ENCODE measurements at regions of chr15 and their contacts with region 1.

Region 1: DNA sequence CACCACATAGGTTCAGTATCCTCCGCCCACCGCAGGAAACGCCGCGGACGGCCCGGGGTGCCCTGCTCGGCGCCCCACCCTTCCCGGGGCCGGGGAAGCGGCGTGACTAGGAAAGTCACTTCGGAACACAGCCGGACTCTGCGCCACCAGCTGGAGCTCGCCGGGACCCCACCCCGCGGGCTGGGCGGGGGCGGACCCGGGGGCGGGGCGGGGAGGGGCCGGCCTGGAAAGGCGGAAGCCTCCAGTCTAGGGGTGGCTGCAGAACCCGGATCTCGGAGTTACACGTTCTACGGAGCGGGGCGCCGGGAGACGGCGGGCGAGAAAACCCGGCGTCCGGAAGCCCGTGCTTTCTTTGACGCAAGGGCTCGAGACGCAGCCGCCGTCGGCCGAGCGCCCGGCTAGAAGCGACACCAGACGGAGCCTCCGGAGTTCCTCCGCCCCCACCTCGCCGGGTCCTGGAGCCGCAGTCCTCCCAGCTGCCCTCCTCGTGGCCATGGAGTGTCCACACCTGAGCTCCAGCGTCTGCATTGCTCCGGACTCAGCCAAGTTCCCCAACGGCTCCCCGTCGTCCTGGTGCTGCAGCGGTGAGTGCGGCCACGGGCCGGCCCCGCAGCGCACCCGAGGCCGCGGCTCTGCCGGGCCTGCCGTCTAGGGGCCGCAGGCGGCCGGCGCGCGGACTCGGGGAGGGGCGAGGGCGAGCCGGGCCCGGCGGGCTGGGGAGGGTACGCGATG is at the start of gene USP3:
- DNase-seq: peak; percentile 99
- total RNA-seq, gene USP3: 40.3 to 41.8 TPM

Region 2: GRCh38 chr15:63553388-63553791 is 49.0 kb after region 1 on chr15:
- intact Hi-C with region 1: loop called in 1 of 2 experiments (anchors 10 kb)
- DNase-seq: no peak

Region 3: DNA sequence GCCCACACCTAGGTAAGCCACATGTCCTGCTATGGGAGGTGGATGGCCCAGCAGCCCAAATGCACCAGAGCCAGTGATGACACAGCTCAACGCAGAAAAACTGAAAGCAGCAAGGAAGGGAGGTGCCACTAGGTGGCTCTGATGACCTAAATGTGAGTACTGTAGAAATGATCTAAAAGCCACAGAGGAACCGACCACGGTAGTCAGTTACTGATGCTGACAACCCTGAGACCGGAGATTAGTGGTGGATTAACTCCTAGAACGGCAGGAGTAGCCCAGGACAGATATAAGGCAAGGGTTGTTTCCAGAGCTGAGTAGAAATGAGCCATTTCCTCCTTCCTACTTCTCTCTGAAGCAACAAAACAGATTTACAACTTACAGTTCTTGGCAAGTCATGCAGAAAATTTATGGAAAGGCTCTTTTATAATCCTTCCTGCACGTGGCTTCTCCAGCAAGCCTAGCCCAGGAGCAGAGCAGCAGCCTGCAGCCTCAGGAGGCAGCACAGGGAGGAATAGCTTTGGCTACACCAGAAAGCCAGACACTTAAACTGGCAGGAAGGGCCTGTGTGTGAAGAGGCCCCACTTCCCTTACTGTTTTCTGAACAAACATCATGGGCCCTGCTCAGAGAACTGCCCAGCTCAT is 105.9 kb after region 1 on chr15:
- intact Hi-C with region 1: no loop called
- DNase-seq: no peak

Measured in posterior vena cava (tissue), 2 donors.